ENCODE measurements at regions of chr17 and their contacts with region 1.

Region 1: DNA sequence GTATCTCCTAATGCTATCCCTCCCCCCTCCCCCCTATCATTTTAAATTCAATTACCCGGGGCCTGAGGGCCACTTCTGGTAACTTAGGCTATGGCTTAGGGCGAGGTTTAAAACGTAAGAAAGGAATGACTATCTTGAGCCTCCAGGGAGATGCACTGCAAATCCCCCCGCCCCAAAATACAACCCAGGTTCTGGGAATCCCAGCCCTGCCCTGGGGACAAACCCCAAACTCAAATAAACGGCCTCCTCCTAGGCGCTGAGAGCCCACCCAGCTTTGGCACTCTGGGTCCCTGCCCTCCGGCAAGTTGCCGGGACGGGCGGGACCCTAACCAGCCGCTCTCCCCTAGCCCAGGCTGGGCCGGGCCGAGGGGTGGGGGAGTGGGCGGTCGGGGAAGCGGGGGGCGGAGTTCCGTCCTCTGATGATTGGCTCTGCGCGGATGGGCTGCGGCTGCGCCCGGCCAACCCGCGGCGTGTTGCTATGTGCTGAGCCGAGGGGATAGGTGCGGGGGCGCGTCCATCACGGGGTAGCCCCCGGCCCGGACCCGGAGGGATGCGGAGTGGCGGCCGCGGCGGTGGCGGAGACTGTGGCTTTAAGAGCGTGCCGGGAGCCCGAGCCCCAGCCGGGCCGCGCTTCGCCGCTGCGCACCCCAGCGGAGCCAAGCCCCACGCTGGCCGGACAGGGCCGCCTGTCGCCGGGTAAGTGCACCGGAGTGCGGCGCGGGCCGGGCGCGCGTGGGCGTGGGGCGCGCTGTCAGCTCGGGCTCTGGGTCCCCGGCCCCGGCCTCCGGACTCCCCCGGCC is at the start of gene YPEL2:
- DNase-seq: peak; percentile 98
- ATAC-seq: peak; percentile 98
- H3K4me3 Mint-ChIP-seq: peak within 1 kb of the TSS; percentile 81
- H3K27ac Mint-ChIP-seq: peak within 1 kb of the TSS; percentile 94
- H3K4me1 Mint-ChIP-seq: peaks cover 43% of the 10 kb centered on the region
- H3K27me3 Mint-ChIP-seq: peaks cover 32% of the 10 kb centered on the region
- CTCF ChIP-seq: no peak
- total RNA-seq, gene YPEL2: 2.2 to 3.1 TPM (median 2.5 TPM) in 3 replicates

Region 2: GRCh38 chr17:59186850-59187249 is 144.5 kb before region 1 on chr17:
- CTCF ChIA-PET with region 1: no interaction called
- POLR2A ChIA-PET with region 1: no interaction called
- DNase-seq: no peak
- ATAC-seq: no peak
- H3K4me3 Mint-ChIP-seq: no peak overlapping the region
- H3K27ac Mint-ChIP-seq: no peak overlapping the region
- H3K4me1 Mint-ChIP-seq: no peaks in the 10 kb centered on the region
- H3K27me3 Mint-ChIP-seq: no peaks in the 10 kb centered on the region
- CTCF ChIP-seq: no peak

Region 3: DNA sequence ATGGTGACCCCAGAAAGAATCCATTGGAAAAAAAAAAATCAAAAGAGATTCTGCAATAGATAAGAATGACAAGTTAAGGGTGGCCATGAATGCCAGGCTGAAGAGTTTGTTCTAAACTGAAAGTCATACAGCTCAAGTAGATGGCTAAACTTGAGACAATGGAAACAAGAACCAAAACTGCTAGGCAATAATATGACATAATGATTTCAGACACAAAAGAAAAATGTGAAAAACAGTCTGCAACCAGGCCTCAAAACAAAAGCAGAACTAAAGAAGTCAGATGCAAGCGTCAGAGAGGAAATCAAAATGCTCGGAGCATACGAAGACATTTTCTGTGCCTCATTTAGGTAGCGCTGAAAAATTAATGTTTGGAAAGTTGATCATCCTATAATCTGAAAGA is 54.3 kb before region 1 on chr17:
- CTCF ChIA-PET with region 1: no interaction called
- POLR2A ChIA-PET with region 1: no interaction called
- DNase-seq: no peak
- ATAC-seq: no peak
- H3K4me3 Mint-ChIP-seq: no peak overlapping the region
- H3K27ac Mint-ChIP-seq: no peak overlapping the region; the same call in 1 of the 2 replicates
- H3K4me1 Mint-ChIP-seq: no peaks in the 10 kb centered on the region
- H3K27me3 Mint-ChIP-seq: no peaks in the 10 kb centered on the region; the same call in 1 of the 2 replicates
- CTCF ChIP-seq: no peak

Region 4: GRCh38 chr17:59345476-59345875 is 14.1 kb after region 1 on chr17:
- CTCF ChIA-PET with region 1: interaction called, 12 read pairs
- POLR2A ChIA-PET with region 1: no interaction called
- DNase-seq: no peak
- ATAC-seq: no peak
- H3K4me3 Mint-ChIP-seq: no peak overlapping the region
- H3K27ac Mint-ChIP-seq: no peak overlapping the region
- H3K4me1 Mint-ChIP-seq: peaks cover 13% of the 10 kb centered on the region
- H3K27me3 Mint-ChIP-seq: no peaks in the 10 kb centered on the region
- CTCF ChIP-seq: no peak

Region 5: DNA sequence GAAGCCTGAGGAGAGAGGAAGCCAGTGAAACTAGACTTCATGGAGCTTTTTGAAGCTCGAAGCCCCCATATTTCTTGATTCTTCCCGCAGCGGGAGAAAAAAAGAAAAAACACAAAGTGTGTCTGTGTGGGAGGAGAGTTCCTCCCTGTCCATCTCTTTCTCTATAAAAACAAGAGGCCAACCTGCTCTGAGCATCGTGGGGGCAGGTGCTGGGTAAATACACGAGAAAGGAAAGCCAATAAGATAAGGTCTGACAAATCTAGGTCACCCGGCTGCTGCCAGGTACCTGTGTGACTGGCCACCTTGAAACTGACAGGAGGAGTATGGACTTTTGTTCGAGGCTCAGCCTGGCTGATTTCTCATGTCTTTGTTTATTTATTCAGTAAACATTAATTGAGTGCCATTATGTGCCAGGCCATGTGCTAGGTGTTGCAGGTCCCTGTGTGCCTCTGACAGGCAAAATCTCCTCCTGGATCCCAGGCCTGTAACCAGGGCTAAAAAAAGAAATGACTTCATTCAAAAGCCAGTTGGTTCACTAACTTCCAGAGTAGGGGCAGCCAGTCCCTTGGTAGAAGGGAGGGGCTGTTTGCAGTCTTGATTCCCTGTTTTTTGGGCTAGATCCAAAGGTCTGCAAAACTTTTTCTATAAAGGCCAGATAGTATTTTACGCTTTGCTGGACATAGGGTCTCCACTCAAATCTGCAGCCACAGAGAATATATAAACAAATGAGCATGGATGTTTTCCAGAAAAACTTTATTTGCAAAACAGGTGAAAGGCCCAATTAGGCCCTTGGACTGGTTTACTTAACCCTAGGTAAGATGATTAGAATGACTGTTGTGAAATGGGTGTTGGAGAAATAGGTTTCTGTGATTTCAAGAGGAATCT is 35.7 kb after region 1 on chr17:
- CTCF ChIA-PET with region 1: interaction called, 28 read pairs
- POLR2A ChIA-PET with region 1: interaction called, 3 read pairs
- DNase-seq: no peak
- ATAC-seq: no peak; the same call in 1 of the 2 replicates
- H3K4me3 Mint-ChIP-seq: peak overlapping the region; percentile 18
- H3K27ac Mint-ChIP-seq: peak overlapping the region; percentile 97
- H3K4me1 Mint-ChIP-seq: peaks cover 68% of the 10 kb centered on the region
- H3K27me3 Mint-ChIP-seq: no peaks in the 10 kb centered on the region
- CTCF ChIP-seq: no peak

Region 6: GRCh38 chr17:59427425-59427921 is 96.1 kb after region 1 on chr17:
- CTCF ChIA-PET with region 1: interaction called, 16 read pairs
- POLR2A ChIA-PET with region 1: no interaction called
- DNase-seq: no peak
- ATAC-seq: no peak
- H3K4me3 Mint-ChIP-seq: no peak overlapping the region
- H3K27ac Mint-ChIP-seq: no peak overlapping the region
- H3K4me1 Mint-ChIP-seq: peaks cover 15% of the 10 kb centered on the region
- H3K27me3 Mint-ChIP-seq: no peaks in the 10 kb centered on the region; the same call in 1 of the 2 replicates
- CTCF ChIP-seq: no peak

Region 7: GRCh38 chr17:59440784-59441441 is 109.6 kb after region 1 on chr17:
- CTCF ChIA-PET with region 1: interaction called, 53 read pairs
- POLR2A ChIA-PET with region 1: interaction called, 6 read pairs
- DNase-seq: peak; percentile 91
- ATAC-seq: peak; percentile 98
- H3K4me3 Mint-ChIP-seq: no peak overlapping the region
- H3K27ac Mint-ChIP-seq: no peak overlapping the region
- H3K4me1 Mint-ChIP-seq: peaks cover 3% of the 10 kb centered on the region
- H3K27me3 Mint-ChIP-seq: no peaks in the 10 kb centered on the region; the same call in 1 of the 2 replicates
- CTCF ChIP-seq: peak; percentile 79

Region 8: GRCh38 chr17:59521204-59522126 is 190.1 kb after region 1 on chr17:
- CTCF ChIA-PET with region 1: interaction called, 11 read pairs
- POLR2A ChIA-PET with region 1: no interaction called
- DNase-seq: peak; percentile 81
- ATAC-seq: peak; percentile 96
- H3K4me3 Mint-ChIP-seq: no peak overlapping the region
- H3K27ac Mint-ChIP-seq: peak overlapping the region; percentile 66
- H3K4me1 Mint-ChIP-seq: no peaks in the 10 kb centered on the region
- H3K27me3 Mint-ChIP-seq: no peaks in the 10 kb centered on the region
- CTCF ChIP-seq: peak; percentile 77